ENCODE measurements at regions of chr1 and their contacts with region 1.

Region 1: GRCh38 chr1:79259388-79260336 is 253.1 kb upstream of the ADGRL4 start:
- DNase-seq: peak; percentile 59
- ATAC-seq: peak; percentile 95
- H3K4me3 ChIP-seq: no peak overlapping the region
- H3K27ac ChIP-seq: no peak overlapping the region
- H3K4me1 ChIP-seq: no peaks in the 10 kb centered on the region
- H3K27me3 ChIP-seq: no peaks in the 10 kb centered on the region
- CTCF ChIP-seq: peak; percentile 78
- POLR2A ChIP-seq: no peak
- RAD21 ChIP-seq: peak; percentile 85

Region 2: DNA sequence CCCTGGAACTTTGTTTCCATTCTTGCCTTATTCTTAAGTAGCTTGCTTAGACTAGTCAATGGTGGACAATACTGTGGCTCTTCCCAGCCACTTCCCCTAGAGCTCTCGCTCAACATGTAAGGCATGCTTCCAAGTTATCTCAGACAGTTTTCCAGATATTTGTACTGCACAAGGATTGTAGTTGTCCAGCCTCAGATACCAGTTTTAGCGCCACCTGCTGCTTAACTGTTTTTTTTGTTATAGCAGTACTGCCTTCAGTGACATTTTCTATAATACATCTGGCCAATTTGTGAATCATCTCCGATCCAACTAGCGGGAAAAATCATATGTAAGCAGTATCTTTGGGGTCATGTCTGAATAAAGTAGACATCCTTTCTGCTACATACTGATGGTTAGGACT is 93.6 kb after region 1 on chr1:
- CTCF ChIA-PET with region 1: no interaction called
- POLR2A ChIA-PET with region 1: no interaction called
- dilution Hi-C with region 1: no loop called
- in situ Hi-C with region 1: no loop called
- intact Hi-C with region 1: loop called (anchors 1 kb)
- DNase-seq: peak; percentile 74
- ATAC-seq: peak; percentile 73; the same call in 1 of the 2 replicates
- H3K4me3 ChIP-seq: no peak overlapping the region
- H3K27ac ChIP-seq: no peak overlapping the region
- H3K4me1 ChIP-seq: peaks cover 5% of the 10 kb centered on the region
- H3K27me3 ChIP-seq: no peaks in the 10 kb centered on the region
- CTCF ChIP-seq: peak; percentile 59
- POLR2A ChIP-seq: no peak
- RAD21 ChIP-seq: peak; percentile 60

Region 3: DNA sequence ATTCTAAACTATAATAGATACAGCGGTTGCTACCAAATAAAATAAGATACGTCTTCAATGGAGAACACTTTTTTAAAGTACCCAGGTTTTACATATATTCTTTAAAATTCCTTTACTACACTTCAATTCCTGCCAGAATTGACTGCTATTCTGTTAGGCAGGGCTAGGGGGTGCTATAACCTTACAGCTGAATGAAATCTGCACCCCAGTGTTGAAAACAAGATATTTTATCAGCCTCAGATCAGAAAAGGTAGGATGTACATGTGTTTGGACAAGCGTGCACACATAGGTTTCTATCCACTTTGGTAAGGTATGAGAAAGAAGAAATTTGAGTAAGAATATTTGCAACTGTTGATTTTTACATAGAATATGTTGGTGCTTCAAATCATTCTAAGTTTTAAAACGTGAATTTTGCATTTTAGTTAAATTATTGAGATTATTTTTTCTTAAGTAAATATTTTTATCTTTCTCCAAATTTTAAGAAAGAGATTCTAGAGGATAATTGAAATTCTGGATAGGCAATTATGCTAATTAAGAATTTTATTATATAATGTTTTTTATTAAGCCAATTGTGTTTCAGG is 237.6 kb after region 1 on chr1:
- CTCF ChIA-PET with region 1: no interaction called
- POLR2A ChIA-PET with region 1: no interaction called
- dilution Hi-C with region 1: no loop called
- in situ Hi-C with region 1: no loop called
- intact Hi-C with region 1: loop called (anchors 1 kb)
- DNase-seq: peak; percentile 47
- ATAC-seq: peak; percentile 71; the same call in 1 of the 2 replicates
- H3K4me3 ChIP-seq: no peak overlapping the region
- H3K27ac ChIP-seq: no peak overlapping the region
- H3K4me1 ChIP-seq: no peaks in the 10 kb centered on the region
- H3K27me3 ChIP-seq: no peaks in the 10 kb centered on the region
- CTCF ChIP-seq: peak; percentile 90
- POLR2A ChIP-seq: no peak
- RAD21 ChIP-seq: peak; percentile 92

Region 4: DNA sequence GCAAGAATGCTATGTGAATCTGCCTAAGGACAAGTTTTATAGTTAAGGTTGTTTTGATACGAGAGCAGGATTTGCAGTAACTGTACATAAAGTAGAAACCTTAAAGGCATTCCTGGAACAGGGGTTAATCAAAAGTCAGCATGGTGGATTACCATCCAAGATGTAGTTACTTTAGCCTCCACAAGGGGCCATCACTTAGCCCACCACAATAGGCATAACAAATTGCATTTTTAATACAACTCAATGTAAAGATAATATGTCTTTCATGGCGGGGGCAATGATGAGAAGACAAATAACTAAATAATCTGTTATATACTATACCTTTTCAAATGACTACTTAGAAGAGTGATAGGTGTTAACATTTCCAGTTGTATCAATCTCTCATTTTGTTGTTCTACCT is 358.1 kb after region 1 on chr1:
- CTCF ChIA-PET with region 1: no interaction called
- POLR2A ChIA-PET with region 1: no interaction called
- dilution Hi-C with region 1: no loop called
- in situ Hi-C with region 1: no loop called
- intact Hi-C with region 1: no loop called
- DNase-seq: no peak
- ATAC-seq: no peak
- H3K4me3 ChIP-seq: no peak overlapping the region
- H3K27ac ChIP-seq: no peak overlapping the region
- H3K4me1 ChIP-seq: no peaks in the 10 kb centered on the region
- H3K27me3 ChIP-seq: no peaks in the 10 kb centered on the region
- CTCF ChIP-seq: 0 out of 2 replicates have a peak, but pooled peaks have one; percentile 2
- POLR2A ChIP-seq: no peak
- RAD21 ChIP-seq: no peak

Region 5: GRCh38 chr1:79982211-79982610 is 722.5 kb after region 1 on chr1:
- CTCF ChIA-PET with region 1: no interaction called
- POLR2A ChIA-PET with region 1: no interaction called
- dilution Hi-C with region 1: no loop called
- in situ Hi-C with region 1: no loop called
- intact Hi-C with region 1: loop called (anchors 10 kb)
- DNase-seq: peak; percentile 83
- ATAC-seq: peak; percentile 84
- H3K4me3 ChIP-seq: no peak overlapping the region
- H3K27ac ChIP-seq: peak overlapping the region; percentile 67; the same call in 1 of the 2 replicates
- H3K4me1 ChIP-seq: 0 out of 2 replicates have a peak, but pooled peaks cover 2% of the 10 kb centered on the region
- H3K27me3 ChIP-seq: no peaks in the 10 kb centered on the region
- CTCF ChIP-seq: no peak
- POLR2A ChIP-seq: no peak
- RAD21 ChIP-seq: no peak

Region 6: DNA sequence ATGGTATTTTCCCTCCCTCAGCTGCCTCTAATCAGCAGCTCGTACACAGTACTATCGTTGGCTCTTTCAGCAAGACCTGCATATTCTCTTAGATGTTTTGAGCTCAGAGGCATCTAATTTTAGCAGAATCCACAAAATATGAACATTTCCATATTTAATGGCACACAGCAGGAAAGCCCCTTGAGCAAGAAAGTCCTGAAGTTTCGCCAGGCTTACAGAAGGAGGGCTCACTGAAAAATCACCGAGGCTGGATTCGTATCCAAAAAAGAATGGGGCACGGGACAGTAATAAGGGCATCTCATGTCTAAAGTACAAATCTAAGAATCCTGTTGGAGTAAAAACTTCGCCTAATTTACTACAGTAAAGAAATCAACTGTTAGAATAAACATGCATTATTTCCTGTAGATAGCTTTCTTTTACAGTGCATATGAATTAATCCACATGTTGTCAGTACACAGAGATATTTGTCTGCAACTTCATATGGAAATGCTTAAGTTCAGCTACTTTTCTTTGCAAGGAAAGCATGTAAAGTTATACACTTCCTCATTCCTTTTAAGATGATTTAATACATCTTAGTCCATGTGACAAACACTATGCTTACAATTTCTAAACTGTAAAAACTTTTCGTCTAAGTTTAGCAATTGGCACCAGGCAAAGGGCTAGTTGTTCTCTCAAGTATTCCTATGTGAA is 952.2 kb after region 1 on chr1:
- CTCF ChIA-PET with region 1: no interaction called
- POLR2A ChIA-PET with region 1: no interaction called
- dilution Hi-C with region 1: no loop called
- in situ Hi-C with region 1: no loop called
- intact Hi-C with region 1: loop called (anchors 5 kb)
- DNase-seq: peak; percentile 6
- ATAC-seq: peak; percentile 49; the same call in 1 of the 2 replicates
- H3K4me3 ChIP-seq: no peak overlapping the region
- H3K27ac ChIP-seq: no peak overlapping the region
- H3K4me1 ChIP-seq: no peaks in the 10 kb centered on the region
- H3K27me3 ChIP-seq: no peaks in the 10 kb centered on the region
- CTCF ChIP-seq: no peak
- POLR2A ChIP-seq: no peak
- RAD21 ChIP-seq: no peak